ENCODE measurements at regions of chr3 and their contacts with region 1.

Region 1: GRCh38 chr3:52056968-52057805 is 816 bp upstream of the DUSP7 start:
- DNase-seq: peak; percentile 99 to 100
- ATAC-seq: peak; percentile 83 to 84
- H3K4me3 ChIP-seq: peak overlapping the region; percentile 63 to 93 (median 76)
- H3K27ac ChIP-seq: peak overlapping the region; percentile 92 to 98 (median 94)
- H3K4me1 ChIP-seq: peaks cover 30 to 35% of the 10 kb centered on the region in 2 donors
- H3K27me3 ChIP-seq: no peaks in the 10 kb centered on the region
- CTCF ChIP-seq: peak in 2 of 5 experiments; percentile 11 to 27
- POLR2A ChIP-seq: peak; percentile 58 to 71

Region 2: GRCh38 chr3:52001443-52001974 is 55.7 kb before region 1 on chr3:
- in situ Hi-C with region 1: loop called (anchors 5 to 10 kb)
- intact Hi-C with region 1: loop called (anchors 1 kb)
- DNase-seq: peak; percentile 40 to 73
- ATAC-seq: peak; percentile 55 to 78
- H3K4me3 ChIP-seq: no peak overlapping the region
- H3K27ac ChIP-seq: no peak overlapping the region
- H3K4me1 ChIP-seq: peaks cover 21 to 29% of the 10 kb centered on the region in 2 donors
- H3K27me3 ChIP-seq: no peaks in the 10 kb centered on the region
- CTCF ChIP-seq: peak; percentile 86 to 98 (median 97)
- POLR2A ChIP-seq: no peak

Region 3: DNA sequence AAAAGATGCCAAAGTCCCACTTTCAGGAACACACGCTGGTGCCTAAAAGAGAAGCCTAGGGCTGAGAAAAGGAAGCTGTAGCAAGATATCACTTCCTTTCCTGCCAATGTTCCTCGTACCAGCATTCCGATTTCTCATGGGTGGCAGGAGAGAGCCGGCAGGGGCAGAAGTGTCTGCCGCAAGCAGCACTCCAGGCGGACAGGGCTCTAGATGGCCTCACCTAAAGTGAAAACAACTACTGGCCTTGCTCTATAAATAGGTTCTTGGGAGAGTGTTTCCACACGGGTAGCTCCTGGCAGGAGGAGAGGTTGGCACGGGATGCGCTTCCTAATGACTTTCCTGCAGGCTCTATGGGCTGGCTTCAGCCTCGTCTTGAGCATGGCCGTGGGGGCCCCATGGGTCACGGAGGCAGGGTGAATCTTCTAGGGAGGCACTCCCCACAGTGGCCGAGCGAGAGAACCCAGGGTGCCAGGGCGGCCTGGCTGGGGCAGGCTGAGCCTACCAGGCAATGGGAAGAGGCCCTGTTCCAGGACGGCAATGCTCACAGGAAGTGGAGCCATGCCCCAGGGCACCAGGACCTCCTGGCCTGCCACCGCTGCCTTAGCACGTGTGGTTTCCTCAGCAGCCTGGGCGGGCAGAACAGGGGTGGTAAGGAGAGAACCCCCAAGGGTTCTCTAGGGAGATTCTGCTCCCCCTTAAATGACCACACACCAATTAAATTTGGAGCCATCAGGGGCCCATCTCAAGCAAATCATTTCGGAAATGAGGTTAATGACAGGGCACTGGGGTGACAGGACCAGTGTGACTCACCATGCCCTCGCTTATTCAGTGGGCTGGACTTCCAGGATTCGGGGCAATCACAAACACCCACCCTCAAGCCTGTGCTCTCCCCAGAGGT is 13.8 kb after region 1 on chr3:
- in situ Hi-C with region 1: no loop called
- intact Hi-C with region 1: loop called (anchors 1 kb)
- DNase-seq: peak; percentile 72 to 90
- ATAC-seq: peak; percentile 98
- H3K4me3 ChIP-seq: peak overlapping the region in 1 of 4 donors; percentile 19
- H3K27ac ChIP-seq: peak overlapping the region; percentile 84 to 99 (median 92)
- H3K4me1 ChIP-seq: peaks cover 19 to 27% of the 10 kb centered on the region in 2 donors
- H3K27me3 ChIP-seq: no peaks in the 10 kb centered on the region
- CTCF ChIP-seq: peak in 3 of 5 experiments; percentile 14 to 29 (median 25)
- POLR2A ChIP-seq: peak; percentile 57

Region 4: DNA sequence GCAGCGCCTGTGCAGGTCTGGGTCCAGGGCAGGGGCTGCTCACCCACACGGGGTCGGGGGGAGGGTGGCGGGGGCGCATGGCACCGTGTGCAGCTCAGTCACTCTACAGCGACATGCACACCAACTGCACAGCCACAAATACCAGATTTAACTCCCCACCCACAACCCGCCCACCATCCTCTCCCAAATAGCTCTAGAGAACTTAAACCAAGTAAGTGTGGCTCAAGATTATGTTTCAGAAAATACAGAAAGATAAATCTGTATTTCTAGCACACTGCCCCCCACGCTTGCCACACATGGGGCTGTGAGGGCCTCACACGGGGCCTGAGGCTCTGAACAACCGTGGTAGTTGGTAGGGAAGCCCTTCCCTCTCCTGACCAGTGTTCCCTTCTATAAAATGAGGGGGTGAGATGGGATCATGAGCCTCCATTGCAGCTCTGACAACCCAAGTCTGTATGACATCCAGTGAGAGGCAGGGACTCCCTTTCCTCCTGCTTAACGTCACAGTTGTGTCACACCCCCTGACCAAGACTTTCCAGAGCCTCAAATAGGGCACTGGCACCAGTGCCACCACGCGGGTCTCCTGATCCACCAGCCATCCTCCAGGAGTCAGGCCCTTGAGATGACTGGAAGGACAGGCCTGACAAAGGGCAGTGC is 73.9 kb after region 1 on chr3:
- in situ Hi-C with region 1: no loop called
- intact Hi-C with region 1: no loop called
- DNase-seq: no peak
- ATAC-seq: no peak
- H3K4me3 ChIP-seq: no peak overlapping the region
- H3K27ac ChIP-seq: no peak overlapping the region
- H3K4me1 ChIP-seq: peaks cover 2% of the 10 kb centered on the region in 2 donors
- H3K27me3 ChIP-seq: no peaks in the 10 kb centered on the region
- CTCF ChIP-seq: no peak
- POLR2A ChIP-seq: no peak

Region 5: DNA sequence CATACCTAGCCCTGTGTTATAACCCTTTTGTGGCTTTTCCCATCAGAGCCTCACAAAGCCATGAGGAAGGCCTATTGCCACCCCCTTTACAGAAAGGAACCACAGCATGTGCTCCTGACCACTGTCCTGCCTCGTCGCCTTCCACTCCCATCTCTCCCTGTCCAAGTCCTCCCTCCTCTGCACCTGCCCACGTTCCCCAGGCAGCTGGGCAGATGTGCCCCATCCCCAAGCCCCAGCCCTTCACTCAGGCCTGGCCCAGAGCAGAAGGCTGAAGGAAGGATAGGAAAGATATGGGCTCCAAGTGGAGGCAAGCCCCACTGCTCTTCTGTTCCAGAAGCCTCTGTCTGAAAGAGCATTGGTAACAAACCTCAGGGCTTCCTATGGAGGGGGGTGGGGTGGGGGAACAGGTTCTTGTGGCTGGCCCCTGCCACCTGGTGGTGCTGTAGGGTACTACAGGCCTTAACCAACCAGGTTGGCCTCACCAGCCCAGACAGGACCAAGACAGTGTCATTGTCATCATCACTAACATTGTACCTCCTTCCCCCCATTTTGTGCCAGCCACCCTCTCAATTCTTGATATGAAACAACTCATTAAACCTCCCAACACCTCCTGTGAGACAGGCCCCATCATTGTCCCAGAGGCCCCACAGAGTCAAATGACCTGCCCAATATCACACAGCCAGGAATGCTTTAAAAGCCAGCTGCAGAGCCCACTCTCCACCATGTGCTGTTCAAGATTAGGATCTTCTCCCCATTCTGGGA is 87.0 kb after region 1 on chr3:
- in situ Hi-C with region 1: loop called in 2 of 4 experiments (anchors 10 kb)
- intact Hi-C with region 1: loop called (anchors 1 kb)
- DNase-seq: peak; percentile 78 to 85
- ATAC-seq: peak; percentile 59 to 60
- H3K4me3 ChIP-seq: no peak overlapping the region
- H3K27ac ChIP-seq: no peak overlapping the region
- H3K4me1 ChIP-seq: peaks cover 22 to 23% of the 10 kb centered on the region in 2 donors
- H3K27me3 ChIP-seq: no peaks in the 10 kb centered on the region
- CTCF ChIP-seq: peak; percentile 96 to 99 (median 98)
- POLR2A ChIP-seq: no peak

Region 6: DNA sequence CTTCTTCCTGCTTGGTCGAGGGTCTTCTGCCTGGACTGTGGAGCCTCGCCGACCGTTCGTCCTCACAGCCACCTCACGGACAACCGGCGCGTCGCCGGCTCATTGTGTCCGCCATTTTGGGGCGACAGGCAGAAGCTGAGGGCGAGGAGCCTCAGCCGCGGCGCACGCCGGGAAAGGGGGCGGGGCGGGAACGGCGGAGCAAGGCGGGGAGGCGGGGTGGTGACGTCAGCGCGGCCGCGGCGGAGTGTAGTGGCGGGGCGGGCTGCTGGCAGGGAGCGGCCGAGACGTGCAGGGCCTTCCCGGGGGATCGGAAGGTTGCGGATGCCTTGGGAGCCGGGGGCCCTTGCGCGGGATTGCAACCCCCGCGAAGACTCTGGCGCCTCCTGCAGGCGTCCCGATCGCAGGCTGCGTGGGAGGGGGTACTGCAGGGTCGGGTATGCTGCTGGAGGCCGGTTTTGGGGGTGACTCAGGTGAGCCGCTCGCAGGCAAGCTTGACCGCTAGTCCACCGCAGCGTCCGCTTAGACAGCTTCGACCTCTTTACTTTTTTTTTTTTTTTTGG is 221.4 kb after region 1 on chr3 and contains the start of gene WDR82:
- in situ Hi-C with region 1: no loop called
- intact Hi-C with region 1: loop called (anchors 10 kb)
- DNase-seq: peak; percentile 95 to 96
- ATAC-seq: peak; percentile 87 to 90
- H3K4me3 ChIP-seq: peak within 1 kb of the TSS; percentile 66 to 95 (median 82)
- H3K27ac ChIP-seq: peak within 1 kb of the TSS; percentile 89 to 97 (median 94)
- H3K4me1 ChIP-seq: peaks cover 52 to 58% of the 10 kb centered on the region in 2 donors
- H3K27me3 ChIP-seq: no peaks in the 10 kb centered on the region
- CTCF ChIP-seq: peak; percentile 40 to 68 (median 59)
- POLR2A ChIP-seq: peak; percentile 82 to 88
- total RNA-seq, gene WDR82: 54.1 to 64.9 (median 59.3) TPM